Activated CD4-positive, alpha-beta memory T cell treated with anti-CD3 and anti-CD28 coated beads, Interleukin-2, amount 10 ng/mL, durations not matched to agents 7 days and 5 days (primary cell): ENCODE measurements at regions of chr11 and their contacts with region 1.

Region 1: GRCh38 chr11:45804761-45805304 is at the start of gene SLC35C1:
- DNase-seq: peak; percentile 98
- H3K4me3 Mint-ChIP-seq: peak within 1 kb of the TSS; percentile 91
- H3K27ac Mint-ChIP-seq: peak within 1 kb of the TSS; percentile 83
- H3K4me1 Mint-ChIP-seq: peaks cover 44% of the 10 kb centered on the region
- H3K27me3 Mint-ChIP-seq: no peaks in the 10 kb centered on the region
- total RNA-seq, gene SLC35C1: 15.0 to 17.5 TPM

Region 2: GRCh38 chr11:45815449-45816146 is 10.8 kb after region 1 on chr11:
- CTCF ChIA-PET with region 1: no interaction called
- POLR2A ChIA-PET with region 1: interaction called, 12 read pairs
- DNase-seq: no peak
- H3K4me3 Mint-ChIP-seq: no peak overlapping the region
- H3K27ac Mint-ChIP-seq: no peak overlapping the region
- H3K4me1 Mint-ChIP-seq: peaks cover 3% of the 10 kb centered on the region
- H3K27me3 Mint-ChIP-seq: no peaks in the 10 kb centered on the region

Region 3: GRCh38 chr11:45834298-45834756 is 29.5 kb after region 1 on chr11:
- CTCF ChIA-PET with region 1: interaction called, 17 read pairs
- POLR2A ChIA-PET with region 1: interaction called, 30 read pairs
- DNase-seq: peak; percentile 68
- H3K4me3 Mint-ChIP-seq: peak overlapping the region; percentile 77
- H3K27ac Mint-ChIP-seq: peak overlapping the region; percentile 91
- H3K4me1 Mint-ChIP-seq: peaks cover 39% of the 10 kb centered on the region
- H3K27me3 Mint-ChIP-seq: peaks cover 12% of the 10 kb centered on the region

Region 4: DNA sequence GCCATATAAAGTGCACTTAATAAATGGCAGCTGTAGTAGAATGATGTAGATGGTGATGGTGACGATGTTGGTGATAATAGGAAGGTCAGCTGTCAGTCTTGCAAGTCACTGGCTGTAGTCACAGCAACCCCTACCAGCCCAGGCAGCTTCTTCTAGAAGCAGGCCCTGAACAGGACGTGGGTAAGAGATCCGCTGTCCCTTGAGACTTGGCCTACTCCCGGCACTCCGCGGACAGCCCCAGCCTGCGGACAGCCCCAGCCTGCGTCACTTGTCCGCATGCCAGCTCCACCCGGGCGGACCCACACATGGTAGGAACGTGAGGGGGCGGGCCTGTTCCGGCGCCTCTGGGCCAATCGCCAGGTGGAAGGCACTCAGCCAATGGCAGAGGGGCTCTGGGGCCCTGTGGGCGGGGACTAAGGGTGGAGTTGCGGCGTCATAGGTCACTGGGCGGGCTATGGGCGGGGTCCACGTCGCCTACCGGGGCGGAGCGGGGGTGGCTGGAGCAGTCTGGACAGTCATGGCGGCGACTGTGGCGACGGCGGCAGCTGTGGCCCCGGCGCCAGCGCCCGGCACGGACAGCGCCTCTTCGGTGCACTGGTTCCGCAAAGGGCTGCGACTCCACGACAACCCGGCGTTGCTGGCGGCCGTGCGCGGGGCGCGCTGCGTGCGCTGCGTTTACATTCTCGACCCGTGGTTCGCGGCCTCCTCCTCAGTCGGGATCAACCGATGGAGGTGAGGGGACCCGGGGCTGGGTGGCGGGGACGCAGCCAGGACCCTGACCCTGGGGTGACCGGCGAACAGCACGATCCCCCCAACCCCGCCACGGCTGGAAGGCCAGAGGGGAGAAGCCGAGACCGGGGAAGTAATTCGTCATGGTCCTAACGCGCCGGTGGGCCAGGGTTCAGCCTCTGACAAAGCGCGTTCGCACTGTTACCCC is 42.4 kb after region 1 on chr11 and contains the start of gene CRY2:
- CTCF ChIA-PET with region 1: interaction called, 15 read pairs
- POLR2A ChIA-PET with region 1: interaction called, 26 read pairs
- DNase-seq: peak; percentile 98
- H3K4me3 Mint-ChIP-seq: peak within 1 kb of the TSS; percentile 79
- H3K27ac Mint-ChIP-seq: peak within 1 kb of the TSS; percentile 72
- H3K4me1 Mint-ChIP-seq: peaks cover 54% of the 10 kb centered on the region
- H3K27me3 Mint-ChIP-seq: peaks cover 11% of the 10 kb centered on the region
- total RNA-seq, gene CRY2: 18.4 to 22.7 TPM